ENCODE measurements at regions of chr16 and their contacts with region 1.

Region 1: DNA sequence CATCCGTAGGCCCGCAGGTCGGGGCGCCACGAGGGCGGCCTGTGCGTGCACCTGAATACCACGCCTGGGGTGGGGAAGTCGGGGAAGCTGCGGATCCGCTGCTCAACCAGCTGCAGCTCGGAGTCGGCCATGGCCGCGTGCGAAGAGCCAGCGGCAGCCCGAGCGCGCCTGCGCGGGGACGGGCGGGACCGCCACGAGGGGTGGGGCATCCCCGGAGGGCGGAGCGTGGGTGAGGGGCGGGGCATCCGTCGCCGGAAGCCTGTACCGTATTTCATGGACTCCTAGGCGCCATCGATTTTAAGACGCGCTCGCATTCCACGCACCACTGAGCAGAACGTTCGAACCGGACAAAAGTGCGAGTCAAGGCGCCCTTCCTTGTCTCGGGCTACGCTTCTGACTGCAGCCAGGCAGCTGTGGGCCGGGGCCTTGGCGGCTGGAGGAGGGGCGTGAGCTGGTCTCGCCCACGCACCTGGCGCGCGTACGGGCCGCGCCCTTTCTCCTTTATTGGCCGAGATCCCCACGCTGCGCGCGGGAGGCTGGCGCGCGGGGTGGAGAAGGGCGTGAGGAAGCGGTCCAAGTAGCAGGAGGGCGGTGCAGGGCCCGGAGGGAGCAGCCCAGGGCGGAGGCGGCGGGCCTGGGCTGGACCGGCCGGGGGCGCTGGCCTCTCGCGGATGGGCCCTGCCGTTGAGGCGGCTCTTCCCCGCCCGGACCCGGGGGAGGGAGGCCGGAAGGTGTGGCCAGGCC is at the start of gene APRT:
- DNase-seq: peak; percentile 97
- H3K4me3 Mint-ChIP-seq: peak within 1 kb of the TSS; percentile 97
- H3K27ac Mint-ChIP-seq: peak within 1 kb of the TSS; percentile 97
- H3K4me1 Mint-ChIP-seq: peaks cover 27% of the 10 kb centered on the region
- H3K27me3 Mint-ChIP-seq: no peaks in the 10 kb centered on the region
- total RNA-seq, gene APRT: 314 TPM

Region 2: DNA sequence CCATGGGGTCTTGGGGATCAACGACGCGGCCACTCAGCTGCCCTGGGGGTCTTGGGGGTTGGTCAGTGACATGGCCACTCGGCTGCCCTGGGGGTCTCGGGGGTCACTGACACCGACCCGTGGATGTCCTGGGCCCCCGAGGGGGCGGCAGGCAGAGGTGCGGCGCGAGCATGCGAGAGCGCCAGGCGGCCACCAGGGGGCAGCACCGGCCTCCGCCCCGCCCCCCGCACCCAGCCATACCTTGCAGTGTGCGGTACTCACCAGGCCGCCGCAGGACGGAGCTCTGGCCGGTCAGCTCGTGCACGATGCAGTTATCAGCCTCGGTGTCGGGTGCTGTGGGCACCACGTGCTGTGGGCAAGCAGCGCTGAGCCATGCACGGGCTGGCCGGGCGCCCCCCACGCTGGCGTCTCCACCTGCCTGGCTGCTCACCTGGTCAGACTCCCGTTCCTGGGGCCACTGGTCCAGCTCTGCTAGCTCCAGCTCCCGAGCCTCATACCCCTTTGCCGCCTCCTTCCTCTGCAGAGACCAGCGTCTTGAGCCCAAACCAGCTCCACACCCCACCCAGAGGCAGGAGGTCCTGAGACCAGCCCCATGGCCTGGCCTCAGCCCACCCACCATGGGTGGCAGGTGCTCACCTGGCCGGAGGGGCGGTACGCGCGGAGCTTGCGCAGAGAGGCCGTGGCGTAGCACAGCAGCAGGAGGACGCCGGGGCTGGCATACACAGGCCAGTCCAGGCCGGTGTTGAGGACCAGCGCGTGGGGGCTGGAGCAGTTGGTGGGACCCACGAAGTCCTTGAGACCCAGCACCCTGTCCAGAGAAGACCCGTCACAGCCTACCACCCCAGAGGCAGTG is 74.4 kb before region 1 on chr16:
- CTCF ChIA-PET with region 1: interaction called, 13 read pairs
- intact Hi-C with region 1: no loop called
- DNase-seq: peak; percentile 79
- H3K4me3 Mint-ChIP-seq: no peak overlapping the region
- H3K27ac Mint-ChIP-seq: no peak overlapping the region
- H3K4me1 Mint-ChIP-seq: peaks cover 3% of the 10 kb centered on the region
- H3K27me3 Mint-ChIP-seq: no peaks in the 10 kb centered on the region

Region 3: GRCh38 chr16:88856828-88857733 is 45.1 kb after region 1 on chr16 and contains the starts of genes GALNS and TRAPPC2L:
- CTCF ChIA-PET with region 1: interaction called, 45 read pairs
- intact Hi-C with region 1: loop called (anchors 1 kb)
- DNase-seq: peak; percentile 99
- H3K4me3 Mint-ChIP-seq: peak within 1 kb of the TSS; percentile 88
- H3K27ac Mint-ChIP-seq: peak within 1 kb of the TSS; percentile 63
- H3K4me1 Mint-ChIP-seq: peaks cover 23% of the 10 kb centered on the region
- H3K27me3 Mint-ChIP-seq: no peaks in the 10 kb centered on the region
- total RNA-seq, gene GALNS: 10.9 to 11.2 TPM
- total RNA-seq, gene TRAPPC2L: 57.7 to 66.1 TPM

Region 4: DNA sequence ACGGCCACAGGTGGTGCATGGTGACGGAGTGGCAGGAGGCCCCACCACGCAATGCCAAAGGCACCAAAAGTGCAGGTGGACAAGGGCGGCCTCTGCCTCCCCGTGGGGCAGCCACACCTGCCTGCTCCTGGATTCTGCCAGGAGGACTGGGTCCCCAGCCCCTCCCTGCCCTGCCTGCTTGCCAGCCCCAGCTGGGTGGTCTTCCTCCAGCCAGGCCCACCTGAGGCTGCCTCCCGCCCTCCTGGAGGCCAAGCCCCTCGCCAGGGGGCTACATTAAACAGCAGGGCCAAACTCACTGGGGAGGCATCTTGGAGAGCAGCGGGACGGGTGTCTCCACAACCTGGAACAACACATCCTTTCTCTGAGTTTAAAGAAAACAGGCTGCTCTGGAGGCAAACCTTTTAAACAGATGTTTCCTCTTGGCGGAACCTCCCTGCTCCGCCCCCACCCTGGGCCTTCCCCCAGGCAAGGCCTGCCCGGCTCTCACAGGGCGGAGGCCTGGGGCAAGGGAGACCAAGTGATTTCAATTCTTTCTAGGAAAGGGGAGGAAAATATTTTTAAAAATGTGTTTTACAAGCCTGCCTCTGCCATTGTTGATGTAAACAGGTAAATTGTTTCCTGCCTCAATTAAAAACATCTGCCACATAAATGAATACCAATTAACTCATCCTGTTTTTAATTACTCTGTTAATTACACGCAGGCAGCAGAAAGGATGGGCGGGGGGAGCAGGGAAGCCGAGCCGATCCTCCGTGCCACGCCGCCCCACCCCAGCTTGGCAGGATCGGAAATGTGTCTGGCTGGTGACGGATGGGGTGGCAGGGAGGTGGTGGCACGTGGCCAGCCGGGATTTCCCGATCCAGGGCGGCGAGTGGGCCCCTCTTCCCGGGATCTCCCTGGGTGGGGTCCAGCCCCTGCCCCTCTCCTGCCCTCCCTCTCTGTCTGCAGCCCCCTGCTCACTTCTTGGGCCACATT is 109.0 kb after region 1 on chr16:
- CTCF ChIA-PET with region 1: no interaction called
- intact Hi-C with region 1: loop called (anchors 5 kb)
- DNase-seq: peak; percentile 66
- H3K4me3 Mint-ChIP-seq: no peak overlapping the region
- H3K27ac Mint-ChIP-seq: peak overlapping the region; percentile 39
- H3K4me1 Mint-ChIP-seq: peaks cover 10% of the 10 kb centered on the region
- H3K27me3 Mint-ChIP-seq: no peaks in the 10 kb centered on the region

Region 5: DNA sequence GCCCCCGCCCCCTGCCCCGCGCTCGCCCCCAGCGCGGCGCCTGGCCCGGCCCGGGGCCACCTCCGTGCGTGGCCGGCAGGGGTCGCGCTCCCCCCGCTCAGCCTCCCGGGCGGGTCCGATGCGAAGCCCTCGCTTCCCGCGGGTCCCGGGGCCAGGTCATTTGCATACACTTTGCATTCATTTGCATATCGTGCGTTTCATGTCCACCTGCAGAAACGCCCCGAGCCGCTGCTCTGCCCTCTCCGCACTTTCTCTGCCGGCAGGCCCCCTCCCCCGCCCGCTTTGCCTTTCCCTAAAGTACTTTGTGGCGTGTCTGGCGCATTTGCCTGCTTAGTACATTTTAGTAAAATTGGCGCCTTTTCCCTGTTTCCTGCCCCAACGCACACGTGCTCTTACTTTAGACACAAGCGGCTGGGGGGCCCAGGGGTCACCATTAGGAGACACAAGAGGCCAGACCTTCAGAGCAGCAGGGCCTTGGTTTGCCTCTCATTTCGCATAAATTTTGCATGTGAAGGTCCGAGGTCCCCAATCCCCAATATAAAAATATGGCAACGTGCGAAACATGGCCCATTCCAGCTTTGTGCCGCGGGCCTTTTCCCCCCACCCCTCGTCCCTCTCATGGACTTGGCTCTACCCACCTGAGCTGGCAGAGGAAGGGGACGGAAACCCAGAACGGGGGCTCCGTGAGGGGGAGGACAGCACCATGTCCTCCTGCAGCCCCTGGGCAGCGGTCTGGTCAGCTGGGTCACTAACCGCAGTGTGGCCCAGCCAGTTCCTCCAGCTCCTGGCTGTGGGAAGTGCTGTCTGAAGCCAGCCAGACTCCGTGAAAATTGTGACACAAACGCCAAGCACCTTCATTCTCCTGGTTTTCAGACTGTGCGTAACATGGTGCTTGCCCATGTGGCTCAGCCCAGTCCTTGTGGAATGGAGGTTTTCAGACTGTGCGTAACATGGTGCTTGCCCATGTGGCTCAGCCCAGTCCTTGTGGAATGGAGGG is 130.3 kb after region 1 on chr16:
- CTCF ChIA-PET with region 1: interaction called, 4 read pairs
- intact Hi-C with region 1: loop called (anchors 5 kb)
- DNase-seq: peak; percentile 61
- H3K4me3 Mint-ChIP-seq: peak overlapping the region; percentile 38
- H3K27ac Mint-ChIP-seq: no peak overlapping the region
- H3K4me1 Mint-ChIP-seq: peaks cover 2% of the 10 kb centered on the region
- H3K27me3 Mint-ChIP-seq: peaks cover 30% of the 10 kb centered on the region

Region 6: GRCh38 chr16:89099905-89100304 is 288.0 kb after region 1 on chr16:
- CTCF ChIA-PET with region 1: interaction called, 3 read pairs
- intact Hi-C with region 1: loop called (anchors 5 kb)
- DNase-seq: no peak
- H3K4me3 Mint-ChIP-seq: no peak overlapping the region
- H3K27ac Mint-ChIP-seq: peak overlapping the region; percentile 44
- H3K4me1 Mint-ChIP-seq: peaks cover 64% of the 10 kb centered on the region
- H3K27me3 Mint-ChIP-seq: no peaks in the 10 kb centered on the region

Region 7: GRCh38 chr16:89217388-89218191 is 405.6 kb after region 1 on chr16 and contains the start of gene ZNF778:
- CTCF ChIA-PET with region 1: no interaction called
- intact Hi-C with region 1: loop called (anchors 1 kb)
- DNase-seq: peak; percentile 83
- H3K4me3 Mint-ChIP-seq: peak within 1 kb of the TSS; percentile 83
- H3K27ac Mint-ChIP-seq: peak within 1 kb of the TSS; percentile 89
- H3K4me1 Mint-ChIP-seq: peaks cover 20% of the 10 kb centered on the region
- H3K27me3 Mint-ChIP-seq: no peaks in the 10 kb centered on the region
- total RNA-seq, gene ZNF778: 3.5 to 3.6 TPM